ENCODE measurements at regions of chr22 and their contacts with region 1.

Region 1: DNA sequence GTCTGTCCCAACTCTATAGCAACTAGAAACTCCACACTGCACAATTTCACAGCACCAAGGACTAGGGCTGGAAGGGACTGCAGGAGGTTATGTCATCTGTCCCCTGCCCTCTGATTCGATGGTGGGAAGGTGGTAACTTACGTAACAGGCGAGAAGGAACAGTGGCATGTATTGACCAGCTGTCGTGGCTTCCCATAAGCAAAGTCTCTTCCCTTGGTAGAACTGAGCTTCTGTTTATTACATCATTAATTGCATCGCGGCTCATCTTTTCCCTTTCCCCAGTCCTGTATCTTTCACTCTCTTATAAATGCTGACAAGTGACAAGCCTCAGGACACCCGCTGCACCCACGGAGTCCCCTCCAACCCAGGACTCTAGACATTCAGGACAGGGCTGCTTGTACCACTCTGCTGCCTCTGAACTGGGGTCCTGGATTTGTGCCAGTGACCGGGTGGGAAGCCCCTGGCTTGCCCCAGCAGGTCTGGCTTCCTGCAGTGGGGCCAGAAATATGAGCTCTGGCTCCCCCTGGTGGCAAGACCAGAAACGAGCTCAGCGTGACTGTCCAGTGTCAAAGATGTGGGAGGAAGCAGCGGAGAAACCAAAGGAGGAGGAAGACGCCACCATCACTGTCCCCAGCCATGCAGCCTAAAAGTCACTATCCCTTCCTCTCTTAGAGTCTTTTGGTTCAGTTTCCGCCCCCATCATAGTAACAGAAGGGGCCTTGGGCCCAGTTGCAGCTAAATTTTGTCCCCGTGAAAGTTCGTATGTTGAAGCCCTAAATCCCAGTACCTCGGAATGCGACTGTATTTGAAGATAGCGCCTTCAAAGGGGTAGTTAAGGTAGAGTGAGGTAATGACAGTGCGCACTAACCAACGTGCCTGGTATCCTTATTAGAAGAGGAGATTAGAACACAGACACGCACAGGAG is 84.5 kb downstream of the ISX start:
- H3K4me3 ChIP-seq: no peak overlapping the region
- H3K27ac ChIP-seq: no peak overlapping the region
- H3K4me1 ChIP-seq: no peaks in the 10 kb centered on the region
- CTCF ChIP-seq: peak; percentile 70

Region 2: GRCh38 chr22:34414484-34415440 is 735.7 kb before region 1 on chr22:
- CTCF ChIA-PET with region 1: interaction called, 30 read pairs
- POLR2A ChIA-PET with region 1: no interaction called
- H3K4me3 ChIP-seq: no peak overlapping the region
- H3K27ac ChIP-seq: no peak overlapping the region
- H3K4me1 ChIP-seq: no peaks in the 10 kb centered on the region
- CTCF ChIP-seq: no peak

Region 3: GRCh38 chr22:35033635-35034296 is 116.7 kb before region 1 on chr22:
- CTCF ChIA-PET with region 1: interaction called, 15 read pairs
- POLR2A ChIA-PET with region 1: no interaction called
- H3K4me3 ChIP-seq: no peak overlapping the region
- H3K27ac ChIP-seq: no peak overlapping the region
- H3K4me1 ChIP-seq: no peaks in the 10 kb centered on the region
- CTCF ChIP-seq: no peak

Region 4: DNA sequence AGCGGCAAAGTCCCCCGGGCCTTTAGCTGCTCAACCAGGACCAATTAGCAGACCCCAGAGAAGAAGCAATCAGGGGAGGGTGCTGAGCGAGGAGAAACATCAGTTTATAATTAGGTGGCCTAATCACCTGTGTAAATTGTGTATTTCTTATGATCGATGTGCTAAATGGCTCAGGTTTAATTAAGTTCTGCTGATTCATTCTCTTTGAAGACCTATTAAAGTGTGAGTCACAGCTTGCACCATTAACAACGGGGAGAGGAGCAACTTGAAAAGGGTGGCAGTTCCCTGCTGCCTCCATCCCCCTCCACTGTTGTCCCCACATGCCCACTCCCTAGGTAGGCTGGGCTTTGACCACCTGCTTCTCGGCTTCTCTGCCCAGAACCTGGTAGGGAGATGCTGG is 73.8 kb before region 1 on chr22:
- CTCF ChIA-PET with region 1: interaction called, 12 read pairs
- POLR2A ChIA-PET with region 1: no interaction called
- H3K4me3 ChIP-seq: no peak overlapping the region
- H3K27ac ChIP-seq: no peak overlapping the region
- H3K4me1 ChIP-seq: no peaks in the 10 kb centered on the region
- CTCF ChIP-seq: no peak

Region 5: DNA sequence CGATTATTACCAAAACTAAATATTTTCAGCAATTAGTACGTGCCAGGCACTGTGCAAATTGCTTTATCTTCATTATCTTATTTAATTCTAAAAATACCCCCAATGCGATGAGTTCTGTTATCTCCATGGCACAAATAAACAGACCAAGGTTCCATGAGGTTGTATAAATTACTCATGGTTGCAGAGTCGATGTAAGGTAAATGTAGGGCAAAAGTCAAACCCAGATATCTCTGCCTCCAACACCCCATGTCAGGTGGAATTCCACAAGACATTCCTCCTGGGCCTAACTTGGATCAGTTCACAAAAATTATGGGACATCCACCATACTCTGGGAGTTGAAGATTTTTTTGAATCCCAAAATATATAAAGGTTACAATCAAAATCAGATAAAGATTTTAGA is 40.8 kb before region 1 on chr22:
- CTCF ChIA-PET with region 1: no interaction called
- POLR2A ChIA-PET with region 1: no interaction called
- H3K4me3 ChIP-seq: no peak overlapping the region
- H3K27ac ChIP-seq: no peak overlapping the region
- H3K4me1 ChIP-seq: no peaks in the 10 kb centered on the region
- CTCF ChIP-seq: no peak

Region 6: DNA sequence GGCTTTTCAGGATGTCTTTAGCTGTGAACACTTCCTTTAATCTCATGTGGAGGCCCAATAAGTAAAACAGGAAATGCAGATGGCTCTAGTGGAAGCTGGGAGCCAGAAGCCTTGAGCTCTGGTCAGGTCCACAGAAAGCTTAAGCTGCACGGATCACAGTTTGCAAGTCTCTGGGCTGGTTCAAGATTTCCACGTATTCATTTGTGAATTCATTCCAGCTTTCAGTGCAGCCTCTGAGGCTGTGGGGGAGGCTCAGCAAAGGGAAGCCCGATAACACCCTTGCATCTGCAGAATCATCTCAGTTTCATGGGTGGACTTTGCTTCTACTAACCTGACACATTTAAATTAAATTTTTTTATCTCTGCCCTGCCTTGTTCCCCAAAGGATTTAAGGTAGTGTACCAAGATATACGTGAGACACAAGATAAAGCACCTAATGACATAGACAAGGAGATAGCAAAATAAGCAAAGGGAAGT is 18.9 kb before region 1 on chr22:
- CTCF ChIA-PET with region 1: interaction called, 11 read pairs
- POLR2A ChIA-PET with region 1: no interaction called
- H3K4me3 ChIP-seq: no peak overlapping the region
- H3K27ac ChIP-seq: no peak overlapping the region
- H3K4me1 ChIP-seq: no peaks in the 10 kb centered on the region
- CTCF ChIP-seq: no peak

Region 7: DNA sequence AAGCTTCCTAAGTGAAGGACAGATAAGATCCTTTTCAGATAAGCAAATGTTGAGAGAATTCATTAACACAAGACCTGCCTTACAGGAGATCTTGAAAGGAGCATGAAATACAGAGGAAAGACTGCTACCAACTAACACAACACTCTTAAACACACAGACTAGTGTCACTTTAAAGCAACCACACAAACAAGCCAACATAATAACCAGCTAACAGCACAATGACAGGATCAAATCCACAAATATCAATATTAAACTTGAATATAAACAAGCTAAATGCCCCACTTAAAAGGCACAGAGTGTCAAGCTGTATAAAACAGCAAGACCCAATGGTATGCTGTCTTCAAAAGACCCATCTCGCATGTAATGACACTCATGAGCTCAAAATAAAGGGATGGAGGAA is 36.0 kb after region 1 on chr22:
- CTCF ChIA-PET with region 1: interaction called, 10 read pairs
- POLR2A ChIA-PET with region 1: no interaction called
- H3K4me3 ChIP-seq: no peak overlapping the region
- H3K27ac ChIP-seq: no peak overlapping the region
- H3K4me1 ChIP-seq: no peaks in the 10 kb centered on the region
- CTCF ChIP-seq: no peak

Region 8: DNA sequence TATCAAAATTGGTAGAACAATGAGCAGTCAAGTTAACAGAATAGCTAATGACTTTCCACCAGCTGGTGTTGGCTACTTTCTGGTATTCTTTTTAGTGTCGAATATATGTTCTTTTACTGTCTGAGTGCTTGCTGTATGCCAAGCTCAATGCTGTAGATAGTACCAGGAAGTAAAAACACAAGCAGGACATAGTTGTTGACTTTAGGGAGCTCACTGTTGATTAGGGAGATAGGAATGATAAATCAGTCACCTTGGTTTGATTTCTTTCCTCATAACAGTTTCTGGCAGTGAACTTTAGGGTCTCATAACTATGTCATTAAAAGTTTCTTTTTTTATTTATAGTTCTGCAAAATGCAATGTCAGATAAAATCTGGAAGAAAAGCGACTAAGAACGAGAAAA is 115.8 kb after region 1 on chr22:
- CTCF ChIA-PET with region 1: no interaction called
- POLR2A ChIA-PET with region 1: no interaction called
- H3K4me3 ChIP-seq: no peak overlapping the region
- H3K27ac ChIP-seq: no peak overlapping the region
- H3K4me1 ChIP-seq: no peaks in the 10 kb centered on the region
- CTCF ChIP-seq: no peak

Measured in HEK293 (cell line).